PC-3 (cell line): ENCODE measurements at regions of chr1 and their contacts with region 1.

Region 1: DNA sequence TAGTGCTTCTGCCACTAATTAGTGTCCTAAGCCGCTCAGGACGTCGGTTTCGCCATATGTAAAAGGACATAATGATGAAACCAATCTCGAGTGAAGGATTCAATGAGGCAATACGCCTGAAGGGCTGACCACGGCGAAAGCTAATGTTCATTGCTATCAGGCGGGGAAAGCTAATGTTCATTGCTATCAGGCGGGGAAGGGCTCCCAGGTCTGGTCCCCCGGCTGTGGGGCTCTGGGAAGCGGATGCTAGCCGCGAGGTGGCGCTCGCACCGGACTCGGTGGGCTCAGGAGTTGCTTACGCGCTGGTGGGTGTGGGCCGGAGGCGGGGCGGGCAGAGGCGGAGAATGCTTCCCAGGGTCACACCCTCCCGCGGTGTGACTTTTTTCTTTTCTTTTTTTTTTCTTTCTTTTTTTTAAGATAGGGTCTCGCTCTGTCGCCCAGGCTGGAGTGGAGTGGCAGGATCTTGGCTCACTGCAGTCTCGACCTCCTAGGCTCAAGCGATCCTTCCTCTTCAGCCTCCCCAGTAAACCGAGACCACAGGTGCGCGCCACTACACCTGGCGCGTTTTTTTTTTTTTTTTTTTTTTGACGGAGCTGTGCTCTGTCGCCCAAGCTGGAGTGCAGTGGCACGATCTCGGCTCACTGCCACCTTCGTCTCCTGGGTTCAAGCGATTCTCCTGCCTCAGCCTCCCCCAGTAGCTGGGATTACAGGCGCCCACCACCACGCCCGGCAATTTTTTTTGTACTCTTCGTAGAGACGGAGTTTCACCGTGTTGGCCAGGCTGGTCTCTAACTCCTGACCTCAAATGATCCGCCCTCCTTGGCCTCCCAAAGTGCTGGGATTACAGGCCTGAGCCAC is 1.1 kb upstream of the PEAR1 start:
- DNase-seq: peak; percentile 95
- ATAC-seq: peak; percentile 71
- H3K4me3 ChIP-seq: peak overlapping the region; percentile 54
- H3K27ac ChIP-seq: no peak overlapping the region
- H3K4me1 ChIP-seq: peaks cover 19% of the 10 kb centered on the region
- H3K27me3 ChIP-seq: no peaks in the 10 kb centered on the region
- CTCF ChIP-seq: peak; percentile 91

Region 2: DNA sequence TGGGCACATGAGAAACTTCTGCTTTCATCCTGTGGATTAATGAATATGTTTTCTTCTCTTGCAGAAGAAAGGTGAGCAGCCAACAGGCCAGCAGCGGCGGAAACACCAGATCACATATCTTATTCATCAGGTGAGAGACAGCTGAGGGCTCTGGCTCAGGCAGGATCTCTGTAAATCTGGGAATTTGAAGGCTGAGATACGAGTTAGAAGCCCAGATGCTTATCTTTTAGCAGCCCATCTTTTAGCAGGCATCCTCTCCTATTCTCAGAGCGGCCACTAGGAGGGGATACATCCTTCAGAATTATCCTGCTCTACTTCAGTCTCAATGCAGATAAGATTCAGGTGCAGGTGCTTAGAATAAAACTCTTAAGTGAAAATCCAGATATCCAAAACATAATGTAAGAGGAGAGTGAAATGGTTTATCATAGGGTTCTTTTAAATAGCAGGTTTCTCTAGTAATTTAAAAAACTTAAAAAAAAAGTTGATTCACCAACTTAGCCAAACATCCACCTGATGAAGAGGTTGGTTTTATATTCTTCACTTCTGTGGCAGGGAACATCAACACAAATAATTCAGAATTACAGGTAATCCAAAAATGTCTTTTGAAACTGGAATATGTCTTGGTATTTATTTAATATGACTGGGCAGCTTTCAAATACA is 95.1 kb before region 1 on chr1:
- CTCF ChIA-PET with region 1: interaction called, 3 read pairs
- POLR2A ChIA-PET with region 1: no interaction called
- intact Hi-C with region 1: loop called (anchors 1 kb)
- DNase-seq: peak; percentile 85
- ATAC-seq: peak; percentile 79
- H3K4me3 ChIP-seq: no peak overlapping the region
- H3K27ac ChIP-seq: no peak overlapping the region
- H3K4me1 ChIP-seq: peaks cover 10% of the 10 kb centered on the region
- H3K27me3 ChIP-seq: no peaks in the 10 kb centered on the region
- CTCF ChIP-seq: peak; percentile 97

Region 3: GRCh38 chr1:156813750-156814570 is 78.5 kb before region 1 on chr1:
- CTCF ChIA-PET with region 1: interaction called, 12 read pairs
- POLR2A ChIA-PET with region 1: interaction called, 3 read pairs
- intact Hi-C with region 1: no loop called
- DNase-seq: peak; percentile 64
- ATAC-seq: peak; percentile 62
- H3K4me3 ChIP-seq: peak overlapping the region; percentile 59
- H3K27ac ChIP-seq: peak overlapping the region; percentile 83
- H3K4me1 ChIP-seq: peaks cover 45% of the 10 kb centered on the region
- H3K27me3 ChIP-seq: no peaks in the 10 kb centered on the region
- CTCF ChIP-seq: peak; percentile 68

Region 4: DNA sequence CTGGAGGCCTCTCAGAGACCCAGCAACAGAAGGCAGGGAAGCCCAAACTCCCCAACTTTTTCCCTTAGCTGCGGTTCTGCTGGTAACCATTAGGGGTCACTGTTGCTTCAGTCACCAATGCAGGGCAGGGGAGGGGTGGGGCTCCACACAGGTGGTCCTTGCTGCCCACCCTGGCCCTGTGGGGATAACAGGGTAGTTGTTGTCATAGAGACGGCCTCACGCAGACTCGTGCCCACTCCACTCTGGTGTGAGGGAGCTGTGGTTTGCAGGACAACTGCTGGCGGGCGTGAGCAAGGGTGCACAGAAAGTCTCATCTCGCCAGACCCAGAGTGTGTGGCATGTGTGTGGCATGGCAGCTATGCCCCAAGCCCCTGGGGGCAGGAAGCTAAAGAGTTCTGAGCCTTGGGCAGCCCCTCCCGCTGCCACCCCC is 53.4 kb before region 1 on chr1:
- CTCF ChIA-PET with region 1: interaction called, 13 read pairs
- POLR2A ChIA-PET with region 1: interaction called, 6 read pairs
- intact Hi-C with region 1: loop called (anchors 1 kb)
- DNase-seq: peak; percentile 67
- ATAC-seq: peak; percentile 71
- H3K4me3 ChIP-seq: no peak overlapping the region
- H3K27ac ChIP-seq: no peak overlapping the region
- H3K4me1 ChIP-seq: no peaks in the 10 kb centered on the region
- H3K27me3 ChIP-seq: no peaks in the 10 kb centered on the region
- CTCF ChIP-seq: peak; percentile 98

Region 5: DNA sequence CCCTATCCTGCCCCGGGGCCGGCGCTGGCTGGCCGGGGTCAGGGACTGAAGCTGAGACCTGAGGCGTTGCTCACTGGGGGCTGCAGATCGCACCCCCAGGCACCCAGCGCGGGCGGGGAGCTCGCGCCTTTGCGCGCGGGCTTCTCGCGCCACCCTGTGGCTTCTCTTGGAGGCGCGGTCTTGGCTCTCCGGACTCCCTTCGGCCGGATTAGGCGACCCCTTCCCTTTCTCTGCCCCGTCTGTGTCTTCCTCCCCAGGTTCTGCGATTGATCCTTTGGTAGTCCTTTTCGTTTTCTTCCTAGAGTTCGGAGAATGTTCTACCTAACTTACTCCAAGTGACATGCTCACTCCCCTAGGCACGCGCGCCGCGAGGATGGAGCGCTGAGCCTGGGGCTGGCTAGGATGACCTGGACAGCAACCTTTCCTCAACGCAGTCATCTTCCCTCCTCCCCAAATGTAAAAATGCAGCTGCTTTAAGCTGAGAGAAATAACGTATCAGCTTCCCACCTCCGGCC is 32.2 kb before region 1 on chr1:
- CTCF ChIA-PET with region 1: interaction called, 3 read pairs
- POLR2A ChIA-PET with region 1: interaction called, 15 read pairs
- intact Hi-C with region 1: loop called (anchors 1 kb)
- DNase-seq: peak; percentile 65
- ATAC-seq: peak; percentile 66
- H3K4me3 ChIP-seq: peak overlapping the region; percentile 63
- H3K27ac ChIP-seq: no peak overlapping the region
- H3K4me1 ChIP-seq: peaks cover 22% of the 10 kb centered on the region
- H3K27me3 ChIP-seq: peaks cover 45% of the 10 kb centered on the region
- CTCF ChIP-seq: peak; percentile 96

Region 6: DNA sequence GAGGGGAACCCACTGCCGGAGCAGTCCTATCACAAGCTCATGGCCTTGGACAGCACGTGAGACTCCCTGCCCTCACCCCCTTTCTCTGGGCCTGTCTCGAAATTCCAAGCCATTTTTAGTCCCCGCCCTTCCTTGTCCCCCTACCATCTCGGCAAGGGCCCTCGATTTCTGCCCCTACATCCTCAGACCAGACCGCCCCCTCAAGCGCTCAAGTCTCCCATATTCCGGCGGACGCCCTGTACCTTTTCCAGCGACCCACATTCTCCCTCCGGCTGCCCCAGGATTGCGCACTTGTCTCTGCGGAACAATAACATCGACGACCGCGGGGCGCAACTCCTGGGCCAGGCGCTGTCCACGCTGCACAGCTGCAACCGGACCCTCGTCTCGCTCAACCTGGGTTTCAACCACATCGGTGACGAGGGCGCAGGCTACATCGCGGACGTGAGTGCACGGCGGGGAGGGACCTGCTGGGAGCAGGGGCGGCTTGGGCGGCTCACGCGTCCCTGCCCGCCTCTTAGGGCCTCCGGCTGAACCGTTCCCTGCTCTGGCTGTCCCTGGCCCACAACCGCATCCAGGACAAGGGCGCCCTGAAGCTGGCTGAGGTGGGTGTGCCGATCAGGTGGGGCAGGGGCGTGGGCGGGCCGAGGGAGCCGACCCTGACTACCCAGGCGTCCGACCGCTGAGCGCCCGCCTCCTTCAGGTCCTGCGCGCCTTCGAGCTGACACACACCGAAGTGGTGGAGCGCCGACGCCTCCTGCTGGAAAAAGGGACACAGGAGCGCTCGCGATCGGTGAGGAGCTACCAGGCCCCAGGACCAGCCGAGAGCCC is 35.0 kb after region 1 on chr1:
- CTCF ChIA-PET with region 1: interaction called, 43 read pairs
- POLR2A ChIA-PET with region 1: no interaction called
- intact Hi-C with region 1: loop called (anchors 1 kb)
- DNase-seq: peak; percentile 91
- ATAC-seq: peak; percentile 84
- H3K4me3 ChIP-seq: peak overlapping the region; percentile 72
- H3K27ac ChIP-seq: no peak overlapping the region
- H3K4me1 ChIP-seq: peaks cover 25% of the 10 kb centered on the region
- H3K27me3 ChIP-seq: no peaks in the 10 kb centered on the region
- CTCF ChIP-seq: peak; percentile 93